GM10248 (cell line): ENCODE measurements at regions of chr16 and their contacts with region 1.

Region 1: DNA sequence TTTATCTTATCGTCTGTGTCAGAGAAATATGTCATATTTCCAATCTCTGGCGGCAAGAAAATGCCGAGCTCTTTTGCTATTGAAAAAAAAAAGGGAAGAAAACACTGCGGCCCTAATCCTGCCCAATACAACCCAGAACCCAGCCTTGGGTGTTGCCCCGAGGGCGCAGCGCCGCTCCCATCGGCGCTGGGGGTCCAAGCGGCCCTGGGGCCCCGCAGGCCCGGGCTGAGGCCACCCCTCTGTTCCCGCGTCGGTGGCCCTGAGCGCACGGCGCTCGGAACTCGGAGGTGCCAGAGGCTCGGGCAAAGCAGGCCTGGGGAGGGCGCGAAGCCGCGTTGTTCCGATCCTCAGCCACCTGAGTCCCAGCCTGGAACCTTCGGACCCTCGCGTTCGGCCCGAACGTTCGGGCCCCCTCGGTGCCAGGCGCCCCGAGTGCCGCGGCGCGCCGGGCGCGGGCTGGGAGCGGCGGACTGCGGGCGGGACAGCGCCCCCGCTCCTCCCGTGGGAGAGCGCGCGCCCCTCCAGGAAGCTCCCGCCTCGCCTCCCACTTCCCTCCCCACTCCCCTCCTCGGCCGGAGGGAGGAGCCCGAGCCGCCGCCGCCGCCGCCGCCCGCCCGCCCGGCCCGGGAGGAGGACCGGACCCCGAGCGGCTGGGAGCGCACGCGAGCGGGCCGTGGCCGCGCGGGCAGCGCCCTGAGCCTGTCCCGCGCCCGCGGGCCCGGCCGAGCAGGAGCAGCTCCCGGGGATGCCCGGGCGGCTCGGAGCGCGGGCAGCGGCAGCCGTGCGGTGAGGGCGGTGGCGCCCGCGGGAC is at the start of gene CPNE2:
- DNase-seq: peak; percentile 73
- CTCF ChIP-seq: peak; percentile 44

Region 2: DNA sequence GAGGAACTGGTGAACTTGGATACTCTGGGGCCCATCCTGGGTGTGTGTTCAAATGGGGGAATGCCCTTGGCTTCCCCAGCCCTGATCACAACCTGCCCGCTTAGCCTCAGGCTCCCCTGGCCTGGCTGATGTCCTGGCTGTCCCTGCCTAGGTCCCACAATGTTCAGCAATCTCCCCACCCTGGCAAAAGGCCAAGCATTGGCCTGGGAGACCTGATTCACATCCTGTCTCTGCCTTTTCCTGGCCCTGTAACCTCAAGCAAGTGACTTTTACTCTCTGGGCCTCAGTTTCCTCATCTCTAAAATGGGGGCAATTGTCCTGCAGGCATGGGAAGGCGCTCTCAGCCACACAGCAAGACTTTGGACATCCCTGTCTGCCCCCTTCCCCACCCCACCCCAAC is 14.6 kb after region 1 on chr16:
- CTCF ChIA-PET with region 1: interaction called, 41 read pairs
- POLR2A ChIA-PET with region 1: interaction called, 4 read pairs
- DNase-seq: no peak
- CTCF ChIP-seq: no peak

Region 3: GRCh38 chr16:57128771-57129389 is 36.7 kb after region 1 on chr16:
- CTCF ChIA-PET with region 1: interaction called, 32 read pairs
- POLR2A ChIA-PET with region 1: no interaction called
- DNase-seq: no peak
- CTCF ChIP-seq: no peak

Region 4: GRCh38 chr16:57145046-57146021 is 53.2 kb after region 1 on chr16:
- CTCF ChIA-PET with region 1: interaction called, 10 read pairs
- POLR2A ChIA-PET with region 1: no interaction called
- DNase-seq: no peak
- CTCF ChIP-seq: no peak